ENCODE measurements at regions of chrX and their contacts with region 1.

Region 1: DNA sequence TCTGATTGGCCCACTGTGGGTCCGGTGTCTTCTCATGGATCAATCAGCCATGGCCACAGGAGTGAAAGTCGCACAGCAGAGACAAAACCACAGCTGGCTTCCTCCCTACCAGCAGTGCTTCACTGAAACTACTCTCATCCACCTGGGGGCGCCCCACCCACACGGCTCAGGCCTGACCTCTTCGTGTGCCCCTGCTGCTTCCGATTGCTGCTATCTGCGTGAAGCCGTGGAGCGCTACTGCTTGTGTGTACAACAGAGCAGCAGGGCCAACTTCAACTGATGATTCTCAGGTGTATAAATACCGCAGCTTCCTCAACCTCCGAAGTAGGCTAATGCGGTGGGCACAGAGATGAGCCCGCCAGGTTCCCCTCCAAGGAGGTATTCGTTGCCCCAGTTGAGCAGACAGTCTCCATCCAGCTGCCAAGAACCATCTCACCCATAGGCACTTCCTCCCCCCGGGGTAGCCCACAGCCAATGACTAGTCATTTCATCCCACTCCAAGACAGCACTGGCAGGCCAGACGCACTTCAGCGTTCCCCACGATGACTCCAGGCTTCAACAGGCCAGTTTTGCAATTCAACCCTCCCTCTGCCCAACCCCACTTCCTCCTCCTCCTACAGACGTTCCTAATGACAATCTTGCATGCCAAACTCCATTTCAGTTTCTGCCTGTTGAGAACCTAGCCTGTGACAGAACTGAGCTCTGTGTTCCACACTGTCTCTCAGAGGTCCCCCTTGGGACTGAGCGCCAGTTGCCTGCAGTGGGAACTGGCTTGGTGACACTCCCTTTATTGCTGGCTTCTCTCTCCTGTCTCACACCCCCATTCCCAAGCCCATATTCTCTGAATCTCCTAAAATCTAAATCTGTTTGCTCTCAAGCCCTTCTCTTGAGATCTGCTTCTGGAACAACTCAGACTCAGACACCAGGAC is 41.3 kb upstream of the ATP6AP2 start:
- DNase-seq: peak; percentile 44
- H3K4me3 ChIP-seq: no peak overlapping the region
- H3K27ac ChIP-seq: no peak overlapping the region
- H3K4me1 ChIP-seq: no peaks in the 10 kb centered on the region
- H3K27me3 ChIP-seq: no peaks in the 10 kb centered on the region
- CTCF ChIP-seq: peak; percentile 53

Region 2: GRCh38 chrX:38754102-38754790 is 1785.2 kb before region 1 on chrX:
- CTCF ChIA-PET with region 1: no interaction called
- POLR2A ChIA-PET with region 1: no interaction called
- intact Hi-C with region 1: loop called (anchors 10 kb)
- DNase-seq: peak; percentile 44
- H3K4me3 ChIP-seq: no peak overlapping the region
- H3K27ac ChIP-seq: no peak overlapping the region
- H3K4me1 ChIP-seq: no peaks in the 10 kb centered on the region
- H3K27me3 ChIP-seq: no peaks in the 10 kb centered on the region
- CTCF ChIP-seq: peak; percentile 70

Region 3: GRCh38 chrX:40647307-40648197 is 108.1 kb after region 1 on chrX and contains the start of gene CXorf38:
- CTCF ChIA-PET with region 1: interaction called, 11 read pairs
- POLR2A ChIA-PET with region 1: no interaction called
- intact Hi-C with region 1: loop called (anchors 5 kb)
- DNase-seq: peak; percentile 93
- H3K4me3 ChIP-seq: peak within 1 kb of the TSS; percentile 80
- H3K27ac ChIP-seq: peak within 1 kb of the TSS; percentile 71
- H3K4me1 ChIP-seq: no peaks in the 10 kb centered on the region
- H3K27me3 ChIP-seq: no peaks in the 10 kb centered on the region
- CTCF ChIP-seq: peak; percentile 21; the same call in 1 of the 2 replicates
- total RNA-seq, gene CXorf38: 8.1 and 10.1 TPM in 2 replicates

Region 4: GRCh38 chrX:40792433-40792832 is 253.0 kb after region 1 on chrX:
- CTCF ChIA-PET with region 1: interaction called, 36 read pairs
- POLR2A ChIA-PET with region 1: no interaction called
- intact Hi-C with region 1: loop called (anchors 10 kb)
- DNase-seq: no peak
- H3K4me3 ChIP-seq: no peak overlapping the region
- H3K27ac ChIP-seq: no peak overlapping the region
- H3K4me1 ChIP-seq: peaks cover 8% of the 10 kb centered on the region
- H3K27me3 ChIP-seq: no peaks in the 10 kb centered on the region
- CTCF ChIP-seq: no peak

Region 5: GRCh38 chrX:41116948-41117347 is 577.5 kb after region 1 on chrX:
- CTCF ChIA-PET with region 1: interaction called, 4 read pairs
- POLR2A ChIA-PET with region 1: no interaction called
- intact Hi-C with region 1: loop called (anchors 10 kb)
- DNase-seq: peak; percentile 25
- H3K4me3 ChIP-seq: peak overlapping the region; percentile 14
- H3K27ac ChIP-seq: no peak overlapping the region
- H3K4me1 ChIP-seq: peaks cover 31% of the 10 kb centered on the region
- H3K27me3 ChIP-seq: no peaks in the 10 kb centered on the region
- CTCF ChIP-seq: no peak

Region 6: GRCh38 chrX:41259516-41259915 is 720.0 kb after region 1 on chrX:
- CTCF ChIA-PET with region 1: no interaction called
- POLR2A ChIA-PET with region 1: no interaction called
- intact Hi-C with region 1: loop called (anchors 10 kb)
- DNase-seq: no peak
- H3K4me3 ChIP-seq: no peak overlapping the region
- H3K27ac ChIP-seq: no peak overlapping the region
- H3K4me1 ChIP-seq: no peaks in the 10 kb centered on the region
- H3K27me3 ChIP-seq: no peaks in the 10 kb centered on the region
- CTCF ChIP-seq: no peak